ENCODE measurements at regions of chr2 and their contacts with region 1.

Region 1: GRCh38 chr2:112626604-112627059 is 19.1 kb upstream of the SLC20A1 start:
- DNase-seq: peak; percentile 19
- H3K4me3 ChIP-seq: no peak overlapping the region
- H3K27me3 ChIP-seq: no peaks in the 10 kb centered on the region
- CTCF ChIP-seq: peak; percentile 96

Region 2: GRCh38 chr2:112566104-112566503 is 60.5 kb before region 1 on chr2:
- CTCF ChIA-PET with region 1: no interaction called
- POLR2A ChIA-PET with region 1: no interaction called
- DNase-seq: no peak
- H3K4me3 ChIP-seq: no peak overlapping the region
- H3K27me3 ChIP-seq: no peaks in the 10 kb centered on the region
- CTCF ChIP-seq: no peak

Region 3: GRCh38 chr2:112606488-112606902 is 20.1 kb before region 1 on chr2:
- CTCF ChIA-PET with region 1: interaction called, 16 read pairs
- POLR2A ChIA-PET with region 1: no interaction called
- DNase-seq: no peak
- H3K4me3 ChIP-seq: no peak overlapping the region
- H3K27me3 ChIP-seq: no peaks in the 10 kb centered on the region
- CTCF ChIP-seq: no peak

Region 4: DNA sequence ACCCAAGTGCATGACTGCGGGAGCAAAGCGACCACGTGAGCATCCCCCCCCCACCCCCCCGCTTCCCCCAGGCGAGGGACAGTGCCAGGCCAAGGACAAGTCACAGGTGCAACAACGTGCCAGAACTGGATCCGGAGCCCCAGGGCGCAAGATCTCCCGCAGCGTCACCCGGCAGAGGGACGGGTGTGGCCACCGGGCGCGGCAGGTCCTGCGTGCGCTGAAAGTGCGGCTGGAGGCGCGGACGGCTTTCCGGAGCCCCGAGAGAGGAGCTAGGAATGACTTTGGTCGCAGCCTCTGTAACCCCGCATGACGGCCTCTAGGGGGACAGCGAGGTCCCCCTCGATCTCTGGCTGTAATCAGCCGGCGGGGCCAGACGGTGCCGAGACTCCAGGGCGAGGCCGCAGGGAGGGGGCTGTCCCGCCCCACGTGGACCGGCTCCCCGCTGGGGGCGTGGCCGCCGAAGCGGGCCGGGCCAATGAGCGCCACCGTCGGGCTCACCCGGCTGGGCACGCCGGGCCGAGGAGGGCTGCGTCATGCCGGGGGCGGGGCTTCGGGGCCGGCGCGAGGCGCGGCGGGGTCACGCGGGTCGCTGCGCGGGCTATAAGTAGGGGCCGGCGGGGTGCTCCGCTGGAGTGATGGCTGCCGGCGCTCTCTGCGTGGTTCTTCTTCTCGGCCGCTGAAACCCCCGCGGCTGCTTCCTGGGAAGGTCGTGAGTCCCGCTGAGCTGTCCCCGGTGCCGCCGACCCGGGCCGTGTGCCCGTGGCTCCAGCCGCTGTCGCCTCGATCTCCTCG is 18.9 kb after region 1 on chr2 and contains the start of gene SLC20A1:
- CTCF ChIA-PET with region 1: interaction called, 83 read pairs
- POLR2A ChIA-PET with region 1: no interaction called
- DNase-seq: peak; percentile 47
- H3K4me3 ChIP-seq: peak within 1 kb of the TSS; percentile 86
- H3K27me3 ChIP-seq: no peaks in the 10 kb centered on the region
- CTCF ChIP-seq: no peak; the same call in 1 of the 2 replicates
- polyA plus RNA-seq, gene SLC20A1: 25.3 and 38.8 TPM in 2 replicates

Region 5: DNA sequence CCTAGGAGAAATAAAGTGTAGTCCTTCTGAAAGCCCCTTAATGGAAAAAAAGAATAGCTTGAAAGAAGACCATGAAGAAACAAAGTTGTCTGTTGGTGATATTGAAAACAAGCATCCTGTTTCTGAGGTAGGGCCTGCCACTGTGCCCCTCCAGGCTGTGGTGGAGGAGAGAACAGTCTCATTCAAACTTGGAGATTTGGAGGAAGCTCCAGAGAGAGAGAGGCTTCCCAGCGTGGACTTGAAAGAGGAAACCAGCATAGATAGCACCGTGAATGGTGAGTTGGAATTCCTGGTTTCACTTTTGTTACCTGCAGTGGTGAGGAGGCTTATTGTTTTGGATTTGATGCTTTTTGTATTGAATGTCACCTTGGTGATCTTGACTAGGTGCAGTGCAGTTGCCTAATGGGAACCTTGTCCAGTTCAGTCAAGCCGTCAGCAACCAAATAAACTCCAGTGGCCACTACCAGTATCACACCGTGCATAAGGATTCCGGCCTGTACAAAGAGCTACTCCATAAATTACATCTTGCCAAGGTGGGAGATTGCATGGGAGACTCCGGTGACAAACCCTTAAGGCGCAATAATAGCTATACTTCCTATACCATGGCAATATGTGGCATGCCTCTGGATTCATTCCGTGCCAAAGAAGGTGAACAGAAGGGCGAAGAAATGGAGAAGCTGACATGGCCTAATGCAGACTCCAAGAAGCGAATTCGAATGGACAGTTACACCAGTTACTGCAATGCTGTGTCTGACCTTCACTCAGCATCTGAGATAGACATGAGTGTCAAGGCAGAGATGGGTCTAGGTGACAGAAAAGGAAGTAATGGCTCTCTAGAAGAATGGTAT is 32.4 kb after region 1 on chr2:
- CTCF ChIA-PET with region 1: interaction called, 13 read pairs
- POLR2A ChIA-PET with region 1: no interaction called
- DNase-seq: no peak
- H3K4me3 ChIP-seq: no peak overlapping the region
- H3K27me3 ChIP-seq: no peaks in the 10 kb centered on the region
- CTCF ChIP-seq: no peak

Region 6: GRCh38 chr2:112665113-112665780 is 38.6 kb after region 1 on chr2:
- CTCF ChIA-PET with region 1: interaction called, 13 read pairs
- POLR2A ChIA-PET with region 1: no interaction called
- DNase-seq: no peak
- H3K4me3 ChIP-seq: no peak overlapping the region
- H3K27me3 ChIP-seq: no peaks in the 10 kb centered on the region
- CTCF ChIP-seq: no peak

Region 7: GRCh38 chr2:112692496-112692911 is 65.9 kb after region 1 on chr2:
- CTCF ChIA-PET with region 1: interaction called, 23 read pairs
- POLR2A ChIA-PET with region 1: no interaction called
- DNase-seq: peak; percentile 81
- H3K4me3 ChIP-seq: no peak overlapping the region
- H3K27me3 ChIP-seq: no peaks in the 10 kb centered on the region
- CTCF ChIP-seq: no peak

Region 8: GRCh38 chr2:112866128-112866835 is 239.7 kb after region 1 on chr2:
- CTCF ChIA-PET with region 1: no interaction called
- POLR2A ChIA-PET with region 1: no interaction called
- DNase-seq: no peak
- H3K4me3 ChIP-seq: no peak overlapping the region
- H3K27me3 ChIP-seq: no peaks in the 10 kb centered on the region
- CTCF ChIP-seq: no peak

Measured in BJ (cell line).